Heart left ventricle (tissue), 16 donors: ENCODE measurements at regions of chr16 and their contacts with region 1.

Region 1: GRCh38 chr16:21584817-21585216 is 14.6 kb upstream of the METTL9 start:
- DNase-seq: no peak
- ATAC-seq: no peak
- H3K4me3 ChIP-seq: no peak overlapping the region
- H3K27ac ChIP-seq: no peak overlapping the region
- H3K4me1 ChIP-seq: peaks cover 0 to 15% (median 0%) of the 10 kb centered on the region in 12 donors
- H3K27me3 ChIP-seq: no peaks in the 10 kb centered on the region
- CTCF ChIP-seq: no peak
- POLR2A ChIP-seq: no peak

Region 2: GRCh38 chr16:20741554-20742285 is 843.1 kb before region 1 on chr16 and contains the start of gene THUMPD1:
- intact Hi-C with region 1: no loop called
- DNase-seq: peak; percentile 95 to 98 (median 97)
- ATAC-seq: peak; percentile 92 to 97 (median 96)
- H3K4me3 ChIP-seq: peak within 1 kb of the TSS; percentile 44 to 100 (median 94)
- H3K27ac ChIP-seq: peak within 1 kb of the TSS; percentile 80 to 98 (median 96)
- H3K4me1 ChIP-seq: peaks cover 3 to 43% (median 17%) of the 10 kb centered on the region in 12 donors
- H3K27me3 ChIP-seq: no peaks in the 10 kb centered on the region
- CTCF ChIP-seq: peak in 4 of 12 donors; percentile 15 to 34 (median 30)
- POLR2A ChIP-seq: peak in 1 of 2 donors; percentile 74
- total RNA-seq, gene THUMPD1: 15.8 to 35.5 (median 20.0) TPM

Region 3: DNA sequence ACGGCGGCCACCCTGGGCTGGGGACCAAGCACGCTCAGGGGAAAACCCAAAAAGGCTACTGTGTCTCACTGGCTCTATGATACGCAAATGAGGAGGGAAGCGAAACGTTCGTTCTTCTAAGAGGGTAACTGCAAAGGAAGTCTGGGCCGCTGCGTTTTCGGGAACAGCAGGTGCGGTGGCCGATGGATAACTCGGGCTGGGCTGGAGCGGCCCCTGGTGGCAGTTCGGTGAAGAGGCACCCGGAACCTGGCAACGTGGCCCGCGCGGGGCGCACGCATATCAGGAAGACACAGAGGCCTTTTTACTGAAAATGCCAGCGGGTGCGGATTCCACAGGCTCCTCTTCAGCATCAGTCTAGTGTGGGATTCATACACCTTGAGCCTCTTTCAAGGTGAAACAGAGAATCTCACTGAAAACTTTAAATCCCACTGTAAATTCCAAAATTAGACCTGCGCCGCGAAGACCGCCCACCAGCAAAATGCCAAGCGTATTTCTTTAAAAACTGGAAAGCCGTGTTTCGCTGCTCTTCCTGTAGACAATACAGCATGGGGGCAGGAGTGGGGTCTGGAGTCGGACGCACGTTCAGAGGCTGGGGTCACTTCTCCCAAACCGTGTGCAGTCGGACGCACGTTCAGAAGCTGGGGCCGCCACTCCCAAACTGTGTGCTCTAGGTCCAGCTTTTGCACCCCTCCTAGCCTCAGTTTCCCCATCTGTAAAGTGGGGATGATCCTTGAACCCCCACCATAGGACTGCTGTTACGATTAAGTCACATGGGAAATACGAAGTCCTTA is 29.8 kb before region 1 on chr16:
- intact Hi-C with region 1: no loop called
- DNase-seq: peak; percentile 88 to 96 (median 89)
- ATAC-seq: peak; percentile 22 to 69 (median 67)
- H3K4me3 ChIP-seq: peak overlapping the region in 6 of 12 donors; percentile 6 to 23 (median 18)
- H3K27ac ChIP-seq: no peak overlapping the region
- H3K4me1 ChIP-seq: peaks cover 2 to 26% (median 14%) of the 10 kb centered on the region in 12 donors
- H3K27me3 ChIP-seq: peaks cover 0 to 10% (median 0%) of the 10 kb centered on the region in 9 donors
- CTCF ChIP-seq: peak; percentile 95 to 100 (median 100)
- POLR2A ChIP-seq: no peak

Region 4: DNA sequence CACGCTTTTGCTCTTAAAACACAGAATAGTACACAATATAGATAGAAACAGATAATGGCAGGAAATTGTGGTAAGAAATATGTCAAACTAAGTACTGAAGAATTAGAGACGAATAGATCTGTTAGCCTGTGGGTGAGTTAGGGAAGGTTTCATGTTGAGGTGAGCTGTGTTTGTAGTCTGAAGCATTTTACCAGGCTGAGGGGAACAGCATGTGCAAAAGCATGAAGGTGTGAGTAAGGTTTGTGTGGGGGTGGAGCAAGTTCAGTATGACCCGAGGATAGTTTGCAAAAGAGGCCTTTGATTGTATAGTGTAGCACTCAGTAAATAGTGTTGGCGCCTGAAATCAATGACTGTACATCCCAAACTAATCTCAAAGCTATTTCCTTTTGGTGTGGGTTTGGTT is 53.8 kb after region 1 on chr16:
- intact Hi-C with region 1: loop called (anchors 1 to 5 kb)
- DNase-seq: no peak
- ATAC-seq: no peak
- H3K4me3 ChIP-seq: no peak overlapping the region
- H3K27ac ChIP-seq: peak overlapping the region in 1 of 12 donors; percentile 43
- H3K4me1 ChIP-seq: peaks cover 0 to 38% (median 0%) of the 10 kb centered on the region in 12 donors
- H3K27me3 ChIP-seq: no peaks in the 10 kb centered on the region
- CTCF ChIP-seq: no peak
- POLR2A ChIP-seq: no peak

Region 5: DNA sequence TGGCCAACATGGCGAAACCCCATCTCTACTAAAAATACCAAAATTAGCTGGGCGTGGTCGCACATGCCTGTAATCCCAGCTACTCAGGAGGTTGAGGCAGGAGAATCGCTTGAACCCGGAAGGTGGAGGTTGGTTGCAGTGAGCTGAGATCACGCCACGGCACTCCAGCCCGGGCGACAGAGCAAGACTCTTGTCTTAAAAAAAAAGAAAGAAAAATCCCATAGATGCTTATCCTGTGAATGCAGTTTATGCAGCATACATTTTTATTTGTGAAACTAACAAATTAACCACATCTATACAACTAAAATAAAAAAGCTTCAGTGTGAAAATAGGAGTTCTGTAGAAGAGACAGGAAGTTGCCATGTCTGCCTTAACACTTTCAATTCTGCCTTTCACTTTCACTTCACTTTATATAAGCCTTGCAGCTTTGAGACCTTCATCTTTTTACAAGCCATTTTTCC is 60.5 kb after region 1 on chr16:
- intact Hi-C with region 1: loop called in 8 of 10 experiments (anchors 1 to 5 kb)
- DNase-seq: no peak
- ATAC-seq: peak in 3 of 4 donors; percentile 54 to 61 (median 59)
- H3K4me3 ChIP-seq: peak overlapping the region in 11 of 12 donors; percentile 9 to 51 (median 35)
- H3K27ac ChIP-seq: peak overlapping the region; percentile 20 to 94 (median 68)
- H3K4me1 ChIP-seq: peaks cover 0 to 88% (median 19%) of the 10 kb centered on the region in 12 donors
- H3K27me3 ChIP-seq: no peaks in the 10 kb centered on the region
- CTCF ChIP-seq: no peak
- POLR2A ChIP-seq: no peak

Region 6: GRCh38 chr16:21708533-21709115 is 123.8 kb after region 1 on chr16:
- intact Hi-C with region 1: loop called (anchors 1 to 10 kb)
- DNase-seq: peak; percentile 45 to 73 (median 58)
- ATAC-seq: peak in 2 of 4 donors; percentile 53 to 63
- H3K4me3 ChIP-seq: no peak overlapping the region
- H3K27ac ChIP-seq: no peak overlapping the region
- H3K4me1 ChIP-seq: peaks cover 0 to 9% (median 0%) of the 10 kb centered on the region in 12 donors
- H3K27me3 ChIP-seq: peaks cover 0 to 3% (median 0%) of the 10 kb centered on the region in 9 donors
- CTCF ChIP-seq: peak; percentile 78 to 90 (median 84)
- POLR2A ChIP-seq: no peak

Region 7: DNA sequence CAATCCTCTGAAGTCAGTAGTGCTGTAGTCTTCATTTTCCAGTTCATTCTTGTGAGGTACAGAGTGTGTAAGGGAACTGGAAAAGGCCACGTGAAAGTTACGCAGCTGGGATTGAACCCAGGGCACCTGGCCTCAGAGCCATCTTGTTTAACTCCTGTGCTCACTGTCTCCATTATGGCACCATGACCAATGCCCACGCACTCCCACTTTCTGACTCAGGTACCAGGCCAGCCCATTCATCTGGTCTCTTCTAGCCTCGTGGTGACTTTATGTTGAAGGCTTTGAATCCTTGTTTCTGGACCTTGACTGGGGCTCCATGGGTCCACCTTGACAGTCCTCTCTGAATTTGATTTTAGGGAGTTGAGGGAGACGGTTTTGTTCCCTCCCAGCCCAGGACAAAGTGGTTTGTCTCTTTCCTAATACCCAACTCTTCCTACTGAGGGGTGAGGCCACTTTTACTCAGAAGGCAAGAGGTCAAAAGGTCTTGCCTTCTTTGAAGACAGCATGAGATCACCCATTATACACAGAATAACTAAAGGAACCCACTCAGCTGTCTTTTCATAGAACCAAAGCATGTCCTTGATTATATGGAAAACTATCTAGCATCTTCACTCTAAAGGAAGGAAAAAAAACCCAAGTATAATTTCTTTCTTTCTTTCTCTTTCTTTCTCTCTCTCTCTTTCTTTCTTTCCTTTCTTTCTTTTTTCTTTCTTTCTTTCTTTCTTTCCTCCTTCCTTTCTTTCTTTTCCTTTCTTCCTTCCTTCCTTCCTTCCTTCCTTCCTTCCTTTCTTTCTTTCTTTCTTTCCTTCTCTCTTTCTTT is 128.9 kb after region 1 on chr16:
- intact Hi-C with region 1: loop called (anchors 1 to 10 kb)
- DNase-seq: no peak
- ATAC-seq: no peak
- H3K4me3 ChIP-seq: no peak overlapping the region
- H3K27ac ChIP-seq: no peak overlapping the region
- H3K4me1 ChIP-seq: peaks cover 0 to under 1% (median 0%) of the 10 kb centered on the region in 12 donors
- H3K27me3 ChIP-seq: no peaks in the 10 kb centered on the region
- CTCF ChIP-seq: no peak
- POLR2A ChIP-seq: no peak

Region 8: GRCh38 chr16:22694887-22695382 is 1110.1 kb after region 1 on chr16:
- intact Hi-C with region 1: loop called in 2 of 10 experiments (anchors 1 to 2 kb)
- DNase-seq: peak in 2 of 5 donors; percentile 38 to 53
- ATAC-seq: peak; percentile 80 to 96 (median 88)
- H3K4me3 ChIP-seq: peak overlapping the region in 1 of 12 donors; percentile 3
- H3K27ac ChIP-seq: peak overlapping the region in 11 of 12 donors; percentile 12 to 73 (median 41)
- H3K4me1 ChIP-seq: peaks cover 0 to 14% (median 0%) of the 10 kb centered on the region in 12 donors
- H3K27me3 ChIP-seq: no peaks in the 10 kb centered on the region
- CTCF ChIP-seq: no peak
- POLR2A ChIP-seq: no peak

Region 9: DNA sequence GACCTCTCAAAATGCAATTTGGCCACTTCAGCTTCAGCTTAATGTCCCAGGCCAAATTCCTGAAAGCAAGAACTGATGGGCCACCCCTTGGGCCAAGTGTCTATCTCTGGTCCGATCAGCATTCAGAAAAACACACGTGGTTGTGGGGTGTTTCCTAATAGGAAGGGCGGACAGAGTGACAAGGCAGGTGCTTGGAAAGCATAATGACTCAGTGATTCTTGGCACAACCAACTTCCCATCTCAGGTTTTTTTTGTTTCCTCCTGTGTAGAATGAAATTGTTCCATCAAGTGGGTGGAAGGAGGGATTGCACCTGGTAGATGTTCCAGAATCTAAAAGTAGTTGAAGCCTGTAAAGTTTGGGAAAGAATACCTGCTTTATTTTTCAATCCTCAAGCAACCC is 1384.8 kb after region 1 on chr16:
- intact Hi-C with region 1: loop called in 1 of 10 experiments (anchors 10 kb)
- DNase-seq: peak in 1 of 5 donors; percentile 20
- ATAC-seq: peak in 3 of 4 donors; percentile 61 to 80 (median 61)
- H3K4me3 ChIP-seq: no peak overlapping the region
- H3K27ac ChIP-seq: peak overlapping the region in 1 of 12 donors; percentile 68
- H3K4me1 ChIP-seq: peaks cover 0 to 22% (median 11%) of the 10 kb centered on the region in 12 donors
- H3K27me3 ChIP-seq: peaks cover 0 to 5% (median 0%) of the 10 kb centered on the region in 9 donors
- CTCF ChIP-seq: peak in 1 of 12 donors; percentile 31
- POLR2A ChIP-seq: no peak